B cell (primary cell): ENCODE measurements at regions of chr20 and their contacts with region 1.

Region 1: GRCh38 chr20:49982346-49983122 is at the start of gene SNAI1:
- DNase-seq: peak; percentile 92
- ATAC-seq: peak; percentile 91
- H3K4me3 ChIP-seq: peak within 1 kb of the TSS in 4 of 5 experiments; percentile 27 to 67 (median 54)
- H3K4me3 Mint-ChIP-seq: peak within 1 kb of the TSS; percentile 81
- H3K27ac ChIP-seq: peak within 1 kb of the TSS; percentile 25 to 45
- H3K27ac Mint-ChIP-seq: peak within 1 kb of the TSS; percentile 80
- H3K4me1 ChIP-seq: peaks cover 18 to 26% of the 10 kb centered on the region in 2 donors
- H3K4me1 Mint-ChIP-seq: peaks cover 24% of the 10 kb centered on the region
- H3K27me3 ChIP-seq: peaks cover 0 to 2% (median 0%) of the 10 kb centered on the region in 4 experiments
- H3K27me3 Mint-ChIP-seq: no peaks in the 10 kb centered on the region
- CTCF ChIP-seq: peak; percentile 68
- total RNA-seq, gene SNAI1: 3.5 and 4.3 TPM in 2 replicates

Region 2: DNA sequence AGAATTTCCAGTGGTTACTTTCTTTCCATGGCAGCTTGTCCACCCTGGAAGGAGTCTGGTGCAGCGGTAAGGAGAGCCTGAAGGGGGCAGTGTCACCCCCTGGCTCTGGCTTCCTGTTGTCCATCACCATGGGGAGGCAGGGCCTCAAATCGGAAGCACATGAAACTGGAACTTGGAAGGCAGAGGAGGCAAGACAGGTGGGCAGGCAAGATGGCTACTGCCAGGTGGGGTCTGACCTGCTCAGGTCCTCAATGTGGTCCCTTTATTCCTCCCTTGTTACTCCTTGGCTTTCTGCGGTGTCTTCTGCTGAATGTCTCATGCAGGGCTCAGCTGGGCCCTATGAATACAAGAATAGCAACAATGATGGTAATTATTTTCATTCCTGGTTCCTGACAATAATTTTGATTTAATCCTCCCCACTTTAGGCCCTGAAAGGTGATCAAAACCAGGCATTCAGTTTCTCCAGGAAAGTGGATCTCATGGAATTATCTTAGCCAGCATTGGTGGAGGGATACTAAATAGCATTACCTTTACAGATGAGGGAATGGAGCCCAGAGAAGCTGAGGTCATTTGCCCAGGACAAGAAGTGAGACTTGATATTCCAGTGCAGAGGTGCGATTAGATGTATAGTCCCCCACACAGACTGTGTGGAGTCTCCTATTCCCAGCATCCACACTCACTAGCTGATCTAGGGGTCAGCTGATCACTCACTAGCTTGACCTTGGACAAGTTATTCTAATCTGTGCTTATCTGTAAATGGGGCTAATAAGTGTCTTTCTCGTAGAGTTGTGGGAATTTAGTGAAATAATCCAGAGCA is 17.4 kb before region 1 on chr20:
- CTCF ChIA-PET with region 1: interaction called, 20 read pairs
- POLR2A ChIA-PET with region 1: interaction called, 5 read pairs
- intact Hi-C with region 1: no loop called
- DNase-seq: no peak
- ATAC-seq: no peak
- H3K4me3 ChIP-seq: no peak overlapping the region
- H3K4me3 Mint-ChIP-seq: no peak overlapping the region
- H3K27ac ChIP-seq: no peak overlapping the region
- H3K27ac Mint-ChIP-seq: no peak overlapping the region
- H3K4me1 ChIP-seq: no peaks in the 10 kb centered on the region
- H3K4me1 Mint-ChIP-seq: no peaks in the 10 kb centered on the region
- H3K27me3 ChIP-seq: no peaks in the 10 kb centered on the region
- H3K27me3 Mint-ChIP-seq: no peaks in the 10 kb centered on the region
- CTCF ChIP-seq: peak; percentile 56

Region 3: DNA sequence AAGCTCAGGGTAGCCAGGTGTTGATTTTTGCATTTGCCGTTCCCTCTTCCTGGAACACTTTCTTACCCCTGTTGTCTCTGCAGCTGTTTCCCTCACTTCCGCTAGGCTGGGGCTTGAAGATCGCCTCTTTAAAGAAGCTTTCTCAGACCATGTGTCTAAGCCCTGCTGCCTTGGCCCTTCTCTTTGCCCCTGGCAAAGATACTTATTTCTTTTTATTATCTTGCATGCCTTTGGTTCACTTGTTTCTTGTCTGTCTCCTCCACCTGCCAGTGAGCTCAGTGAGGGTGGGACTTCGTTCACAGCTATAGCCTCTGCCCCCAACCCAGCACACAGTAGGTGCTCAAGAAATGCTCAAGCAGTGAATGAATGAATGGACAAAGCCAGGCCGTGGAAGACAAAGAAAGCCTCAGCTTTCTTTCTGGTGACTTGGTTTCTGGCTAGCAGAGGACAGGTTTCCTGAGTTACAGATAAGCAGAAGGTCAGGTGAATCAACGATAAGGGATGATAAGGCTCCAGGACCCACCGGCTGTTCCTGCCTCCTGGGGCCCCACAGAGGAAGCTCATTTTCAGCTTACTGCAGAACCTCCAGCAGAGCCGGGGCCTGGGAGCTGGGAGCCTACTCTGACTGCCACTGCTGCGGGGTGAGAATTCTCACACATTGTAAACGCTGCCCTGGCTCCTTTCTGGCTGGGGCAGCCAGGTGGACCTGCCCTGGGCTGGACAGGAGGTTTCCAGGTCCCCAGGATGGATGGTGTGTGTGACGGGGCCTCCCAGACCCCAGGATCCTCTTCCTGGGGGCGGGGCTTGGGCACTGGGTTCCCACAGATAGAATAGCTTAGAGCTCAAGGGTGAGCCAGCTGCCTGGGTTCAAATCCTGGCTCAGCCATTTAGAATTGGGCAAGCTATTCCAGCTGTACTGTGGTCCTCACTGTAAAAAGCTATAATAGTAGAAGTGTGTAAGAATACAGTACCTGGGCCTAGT is 30.0 kb after region 1 on chr20:
- CTCF ChIA-PET with region 1: interaction called, 13 read pairs
- POLR2A ChIA-PET with region 1: no interaction called
- intact Hi-C with region 1: no loop called
- DNase-seq: peak; percentile 77
- ATAC-seq: peak; percentile 90
- H3K4me3 ChIP-seq: no peak overlapping the region
- H3K4me3 Mint-ChIP-seq: no peak overlapping the region
- H3K27ac ChIP-seq: peak overlapping the region; percentile 11 to 39
- H3K27ac Mint-ChIP-seq: peak overlapping the region; percentile 26
- H3K4me1 ChIP-seq: peaks cover 12 to 16% of the 10 kb centered on the region in 2 donors
- H3K4me1 Mint-ChIP-seq: peaks cover 14% of the 10 kb centered on the region
- H3K27me3 ChIP-seq: peaks cover 0 to 14% (median 5%) of the 10 kb centered on the region in 4 experiments
- H3K27me3 Mint-ChIP-seq: peaks cover 7% of the 10 kb centered on the region
- CTCF ChIP-seq: peak; percentile 8

Region 4: GRCh38 chr20:50027611-50028105 is 45.1 kb after region 1 on chr20:
- CTCF ChIA-PET with region 1: no interaction called
- POLR2A ChIA-PET with region 1: no interaction called
- intact Hi-C with region 1: no loop called
- DNase-seq: no peak
- ATAC-seq: no peak
- H3K4me3 ChIP-seq: no peak overlapping the region
- H3K4me3 Mint-ChIP-seq: no peak overlapping the region
- H3K27ac ChIP-seq: no peak overlapping the region
- H3K27ac Mint-ChIP-seq: no peak overlapping the region
- H3K4me1 ChIP-seq: peaks cover 0 to 4% of the 10 kb centered on the region in 2 donors
- H3K4me1 Mint-ChIP-seq: peaks cover 3% of the 10 kb centered on the region
- H3K27me3 ChIP-seq: no peaks in the 10 kb centered on the region
- H3K27me3 Mint-ChIP-seq: no peaks in the 10 kb centered on the region
- CTCF ChIP-seq: no peak

Region 5: DNA sequence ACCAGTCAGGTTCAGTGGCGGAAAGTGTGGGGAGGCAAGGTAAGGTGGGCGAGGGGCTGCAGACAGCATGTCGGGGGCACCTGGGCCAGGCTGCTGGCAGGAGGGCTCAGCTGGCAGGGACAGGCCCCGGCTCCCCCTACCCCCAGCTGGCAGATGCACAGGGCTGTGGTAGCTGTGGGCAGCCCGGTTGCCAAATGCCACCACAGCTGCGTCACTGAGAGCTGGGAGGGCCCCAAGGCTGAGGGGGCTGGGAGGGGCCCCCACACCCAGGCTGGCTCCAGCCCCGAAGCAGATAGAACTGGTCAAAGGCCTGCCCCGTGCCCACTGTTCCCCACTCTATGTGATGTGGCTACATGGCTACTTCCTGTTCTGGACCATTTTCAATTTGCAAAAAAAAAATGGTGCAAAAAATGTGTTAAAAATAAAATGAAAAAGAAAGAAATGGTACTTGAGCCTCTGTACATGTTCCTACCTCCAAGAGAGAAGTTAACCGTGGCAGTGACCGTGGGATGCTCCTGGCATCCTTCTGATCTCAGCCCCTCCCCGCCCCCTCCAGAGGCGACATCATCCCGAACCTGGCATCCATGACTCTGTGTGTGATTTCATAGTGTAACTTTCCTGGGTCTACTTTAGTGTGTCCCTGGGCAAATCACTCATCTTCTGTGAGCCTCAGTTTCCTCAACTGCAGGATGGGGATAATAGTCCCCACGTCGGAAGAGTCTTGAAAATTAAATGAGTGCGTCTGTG is 66.1 kb after region 1 on chr20:
- CTCF ChIA-PET with region 1: interaction called, 18 read pairs
- POLR2A ChIA-PET with region 1: interaction called, 3 read pairs
- intact Hi-C with region 1: no loop called
- DNase-seq: peak; percentile 48
- ATAC-seq: peak; percentile 71
- H3K4me3 ChIP-seq: no peak overlapping the region
- H3K4me3 Mint-ChIP-seq: peak overlapping the region; percentile 53
- H3K27ac ChIP-seq: no peak overlapping the region
- H3K27ac Mint-ChIP-seq: peak overlapping the region; percentile 51
- H3K4me1 ChIP-seq: peaks cover 29 to 35% of the 10 kb centered on the region in 2 donors
- H3K4me1 Mint-ChIP-seq: peaks cover 29% of the 10 kb centered on the region
- H3K27me3 ChIP-seq: no peaks in the 10 kb centered on the region
- H3K27me3 Mint-ChIP-seq: no peaks in the 10 kb centered on the region
- CTCF ChIP-seq: no peak

Region 6: DNA sequence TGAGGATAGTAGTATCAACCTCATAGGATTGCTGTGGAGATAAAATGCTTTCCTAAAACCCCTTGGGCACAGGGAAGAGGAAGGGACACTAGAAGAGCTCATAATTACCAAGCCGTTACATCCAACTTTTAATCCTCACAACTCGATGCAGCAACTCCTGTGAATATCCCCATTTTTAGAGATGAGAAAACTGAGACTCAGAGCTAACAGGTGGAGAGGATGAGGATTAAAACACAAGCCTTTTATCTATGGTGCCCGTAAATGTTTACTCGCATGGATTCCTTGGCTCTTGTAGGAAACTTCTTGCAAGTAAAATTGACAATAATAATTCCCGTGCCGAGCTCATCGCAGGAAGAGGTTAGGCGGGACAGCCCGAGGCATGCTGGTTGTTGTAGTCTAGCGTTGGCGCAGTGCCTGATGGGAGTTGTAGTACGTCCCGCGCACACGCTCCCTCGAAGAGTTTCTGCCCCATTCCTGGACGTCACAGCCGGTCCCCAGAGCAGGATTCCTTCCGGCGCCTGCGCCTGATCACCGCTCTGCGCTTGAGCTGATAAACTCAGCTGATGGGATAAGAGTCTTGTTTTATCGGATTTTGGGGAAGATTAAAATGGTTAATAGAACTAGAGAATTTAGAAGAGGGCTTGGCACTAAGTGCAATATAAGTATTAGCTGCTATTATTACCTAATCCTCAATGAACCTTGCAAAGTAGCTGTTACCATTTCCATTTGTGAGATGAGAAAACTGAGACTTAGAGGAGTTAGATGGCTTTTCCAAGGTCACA is 133.2 kb after region 1 on chr20:
- CTCF ChIA-PET with region 1: interaction called, 8 read pairs
- POLR2A ChIA-PET with region 1: interaction called, 7 read pairs
- intact Hi-C with region 1: loop called (anchors 1 kb)
- DNase-seq: peak; percentile 87
- ATAC-seq: peak; percentile 77
- H3K4me3 ChIP-seq: peak overlapping the region; percentile 54 to 78 (median 64)
- H3K4me3 Mint-ChIP-seq: peak overlapping the region; percentile 85
- H3K27ac ChIP-seq: peak overlapping the region; percentile 38 to 53
- H3K27ac Mint-ChIP-seq: peak overlapping the region; percentile 86
- H3K4me1 ChIP-seq: peaks cover 39 to 40% of the 10 kb centered on the region in 2 donors
- H3K4me1 Mint-ChIP-seq: peaks cover 56% of the 10 kb centered on the region
- H3K27me3 ChIP-seq: no peaks in the 10 kb centered on the region
- H3K27me3 Mint-ChIP-seq: no peaks in the 10 kb centered on the region
- CTCF ChIP-seq: no peak

Region 7: GRCh38 chr20:50165684-50166554 is 183.4 kb after region 1 on chr20:
- CTCF ChIA-PET with region 1: interaction called, 81 read pairs
- POLR2A ChIA-PET with region 1: no interaction called
- intact Hi-C with region 1: loop called (anchors 1 kb)
- DNase-seq: peak; percentile 74
- ATAC-seq: peak; percentile 97
- H3K4me3 ChIP-seq: peak overlapping the region in 4 of 5 experiments; percentile 24 to 56 (median 47)
- H3K4me3 Mint-ChIP-seq: peak overlapping the region; percentile 84
- H3K27ac ChIP-seq: no peak overlapping the region
- H3K27ac Mint-ChIP-seq: peak overlapping the region; percentile 70
- H3K4me1 ChIP-seq: peaks cover 9 to 10% of the 10 kb centered on the region in 2 donors
- H3K4me1 Mint-ChIP-seq: peaks cover 10% of the 10 kb centered on the region
- H3K27me3 ChIP-seq: peaks cover 0 to 6% (median 2%) of the 10 kb centered on the region in 4 experiments
- H3K27me3 Mint-ChIP-seq: peaks cover 12% of the 10 kb centered on the region
- CTCF ChIP-seq: no peak

Region 8: GRCh38 chr20:50194831-50195755 is 212.6 kb after region 1 on chr20:
- CTCF ChIA-PET with region 1: no interaction called
- POLR2A ChIA-PET with region 1: no interaction called
- intact Hi-C with region 1: no loop called
- DNase-seq: no peak
- ATAC-seq: no peak
- H3K4me3 ChIP-seq: no peak overlapping the region
- H3K4me3 Mint-ChIP-seq: no peak overlapping the region
- H3K27ac ChIP-seq: no peak overlapping the region
- H3K27ac Mint-ChIP-seq: no peak overlapping the region
- H3K4me1 ChIP-seq: peaks cover 16 to 21% of the 10 kb centered on the region in 2 donors
- H3K4me1 Mint-ChIP-seq: peaks cover 15% of the 10 kb centered on the region
- H3K27me3 ChIP-seq: no peaks in the 10 kb centered on the region
- H3K27me3 Mint-ChIP-seq: no peaks in the 10 kb centered on the region
- CTCF ChIP-seq: no peak

Region 9: GRCh38 chr20:50580016-50580747 is 597.6 kb after region 1 on chr20:
- CTCF ChIA-PET with region 1: no interaction called
- POLR2A ChIA-PET with region 1: no interaction called
- intact Hi-C with region 1: no loop called
- DNase-seq: peak; percentile 73
- ATAC-seq: peak; percentile 34
- H3K4me3 ChIP-seq: no peak overlapping the region
- H3K4me3 Mint-ChIP-seq: no peak overlapping the region
- H3K27ac ChIP-seq: no peak overlapping the region
- H3K27ac Mint-ChIP-seq: peak overlapping the region; percentile 82
- H3K4me1 ChIP-seq: peaks cover 20 to 41% of the 10 kb centered on the region in 2 donors
- H3K4me1 Mint-ChIP-seq: peaks cover 44% of the 10 kb centered on the region
- H3K27me3 ChIP-seq: no peaks in the 10 kb centered on the region
- H3K27me3 Mint-ChIP-seq: no peaks in the 10 kb centered on the region
- CTCF ChIP-seq: peak; percentile 81